ENCODE measurements at regions of chr16 and their contacts with region 1.

Region 1: GRCh38 chr16:82456683-82457082 is 170.1 kb upstream of the CDH13 start:
- DNase-seq: peak; percentile 66
- CTCF ChIP-seq: peak; percentile 80

Region 2: DNA sequence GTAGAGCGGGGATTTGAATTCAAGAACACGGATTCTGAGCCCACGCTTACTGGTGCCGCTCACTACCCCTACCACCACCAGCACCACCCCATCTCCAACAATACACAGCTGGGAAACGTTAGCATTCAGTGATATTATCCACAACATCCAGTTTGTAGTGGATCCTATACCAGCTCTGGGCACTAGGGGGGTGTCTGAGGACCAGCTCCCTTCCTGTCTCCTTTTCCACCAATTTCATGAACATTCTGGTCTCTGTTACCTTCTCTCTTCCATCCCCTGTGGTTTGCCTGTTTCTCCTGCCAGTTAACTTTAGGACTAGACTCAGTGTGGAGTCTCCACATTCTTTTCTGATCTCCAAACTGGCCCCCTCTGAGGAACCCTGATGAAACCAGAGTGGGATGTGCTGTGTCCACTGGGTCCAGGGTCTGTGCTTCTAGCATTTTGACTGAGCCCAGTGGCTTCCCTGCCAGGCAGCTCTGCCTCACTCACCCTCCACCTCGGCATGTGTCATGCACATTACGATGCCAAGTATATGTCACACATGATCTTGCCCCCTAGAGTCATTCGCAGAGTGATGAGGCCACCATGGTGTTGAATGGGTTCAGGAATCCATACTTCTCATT is 16.9 kb before region 1 on chr16:
- CTCF ChIA-PET with region 1: interaction called, 19 read pairs
- POLR2A ChIA-PET with region 1: no interaction called
- DNase-seq: peak; percentile 21
- CTCF ChIP-seq: no peak

Region 3: GRCh38 chr16:82470620-82471152 is 14.0 kb after region 1 on chr16:
- CTCF ChIA-PET with region 1: interaction called, 49 read pairs
- POLR2A ChIA-PET with region 1: no interaction called
- DNase-seq: no peak
- CTCF ChIP-seq: no peak

Region 4: DNA sequence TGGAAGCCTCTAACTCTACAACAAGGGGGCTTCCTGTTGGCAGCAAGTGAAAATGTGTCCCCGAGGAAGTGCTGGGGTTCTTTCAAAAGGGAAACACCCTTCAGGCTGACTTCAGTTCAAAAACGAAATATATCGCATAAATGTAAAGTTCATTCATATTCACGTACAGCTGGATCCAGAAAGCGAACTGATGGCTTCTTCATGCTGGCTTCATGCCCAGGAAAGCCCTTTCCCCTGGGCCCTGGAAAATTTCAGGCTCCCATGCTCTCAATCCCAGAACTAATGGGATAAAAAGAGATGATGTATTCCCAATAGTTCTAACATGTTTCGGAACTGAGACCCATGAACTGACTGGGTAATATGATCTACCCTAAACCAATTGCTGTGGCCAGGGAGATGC is 65.3 kb after region 1 on chr16:
- CTCF ChIA-PET with region 1: interaction called, 10 read pairs
- POLR2A ChIA-PET with region 1: no interaction called
- DNase-seq: no peak
- CTCF ChIP-seq: no peak

Region 5: DNA sequence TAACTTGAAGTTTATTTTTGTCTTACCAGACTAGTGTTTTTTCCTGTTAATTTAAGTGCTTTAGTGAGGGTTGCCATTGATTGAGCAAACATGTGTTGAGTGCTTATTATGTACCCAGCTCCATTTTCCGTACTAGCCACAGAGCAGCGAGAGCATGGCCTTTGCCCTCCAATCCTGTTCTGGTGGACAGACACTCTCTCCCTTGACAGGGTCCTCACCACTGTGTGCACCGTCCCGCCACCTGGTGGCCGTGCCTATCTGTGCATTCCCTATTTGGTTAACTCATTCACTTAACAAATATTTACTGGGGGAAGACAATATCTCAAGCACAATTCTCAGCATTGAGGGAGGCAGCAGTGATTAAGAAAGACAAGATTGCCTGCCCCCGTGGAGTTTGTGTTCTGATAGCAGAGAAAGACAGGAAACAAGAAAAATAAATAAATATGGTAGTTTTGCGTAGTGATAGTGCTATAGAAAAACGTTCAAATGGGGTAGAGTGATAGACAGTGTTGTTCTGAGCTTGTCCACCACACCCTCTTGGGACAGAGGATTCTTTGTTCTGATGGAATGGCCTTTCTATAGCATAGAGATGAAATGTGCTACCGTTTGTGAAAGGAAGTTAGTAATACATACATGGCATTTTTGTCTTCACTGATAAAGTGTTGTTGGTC is 183.1 kb after region 1 on chr16:
- CTCF ChIA-PET with region 1: no interaction called
- POLR2A ChIA-PET with region 1: no interaction called
- DNase-seq: peak; percentile 54
- CTCF ChIP-seq: peak; percentile 83

Measured in GM10248 (cell line).